Activated T-helper 1 cell treated with anti-CD3 and anti-CD28 coated beads, Interleukin-12 subunit alpha, Interleukin-12 subunit beta, Interleukin-2, Interleukin-4 antibody, amounts not matched to agents 30 ng/mL and 10 ng/mL and 1 ng/mL, durations not matched to agents 14 hours and 24 hours and 36 hours (primary cell): ENCODE measurements at regions of chr12 and their contacts with region 1.

Region 1: DNA sequence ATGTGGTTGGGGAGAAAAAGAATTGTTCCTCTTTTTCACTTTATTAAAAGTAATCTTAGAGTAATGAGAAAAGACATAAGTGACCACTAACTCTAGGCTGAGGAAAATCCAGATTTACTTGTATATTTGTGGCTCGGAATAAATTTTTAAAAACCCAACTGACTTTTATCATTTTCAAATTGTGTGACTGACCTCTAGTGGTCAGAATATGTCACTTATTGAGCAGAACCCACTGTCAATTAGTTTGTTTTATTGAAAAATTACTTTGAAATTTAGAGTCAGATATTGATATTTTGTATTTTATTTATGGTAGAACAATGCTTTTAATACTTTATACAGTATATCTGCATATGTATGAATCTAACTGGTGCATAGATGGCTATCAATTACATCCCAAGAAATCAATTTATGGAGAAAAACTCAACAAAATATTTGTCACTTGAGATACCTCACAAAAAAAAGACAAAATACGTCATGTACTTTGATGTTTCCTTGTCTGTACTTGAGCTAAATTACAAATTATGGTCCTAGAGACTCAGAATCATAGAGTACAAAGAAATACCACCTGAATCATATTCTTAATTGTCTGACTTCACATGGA is 229.4 kb downstream of the CNTN1 start:
- DNase-seq: no peak
- H3K4me3 Mint-ChIP-seq: no peak overlapping the region
- H3K27ac Mint-ChIP-seq: no peak overlapping the region
- H3K4me1 Mint-ChIP-seq: no peaks in the 10 kb centered on the region
- H3K27me3 Mint-ChIP-seq: no peaks in the 10 kb centered on the region

Region 2: GRCh38 chr12:40010899-40011774 is 910.5 kb before region 1 on chr12:
- intact Hi-C with region 1: loop called (anchors 5 kb)
- DNase-seq: peak; percentile 49
- H3K4me3 Mint-ChIP-seq: peak overlapping the region; percentile 12
- H3K27ac Mint-ChIP-seq: no peak overlapping the region
- H3K4me1 Mint-ChIP-seq: peaks cover 31% of the 10 kb centered on the region
- H3K27me3 Mint-ChIP-seq: no peaks in the 10 kb centered on the region

Region 3: DNA sequence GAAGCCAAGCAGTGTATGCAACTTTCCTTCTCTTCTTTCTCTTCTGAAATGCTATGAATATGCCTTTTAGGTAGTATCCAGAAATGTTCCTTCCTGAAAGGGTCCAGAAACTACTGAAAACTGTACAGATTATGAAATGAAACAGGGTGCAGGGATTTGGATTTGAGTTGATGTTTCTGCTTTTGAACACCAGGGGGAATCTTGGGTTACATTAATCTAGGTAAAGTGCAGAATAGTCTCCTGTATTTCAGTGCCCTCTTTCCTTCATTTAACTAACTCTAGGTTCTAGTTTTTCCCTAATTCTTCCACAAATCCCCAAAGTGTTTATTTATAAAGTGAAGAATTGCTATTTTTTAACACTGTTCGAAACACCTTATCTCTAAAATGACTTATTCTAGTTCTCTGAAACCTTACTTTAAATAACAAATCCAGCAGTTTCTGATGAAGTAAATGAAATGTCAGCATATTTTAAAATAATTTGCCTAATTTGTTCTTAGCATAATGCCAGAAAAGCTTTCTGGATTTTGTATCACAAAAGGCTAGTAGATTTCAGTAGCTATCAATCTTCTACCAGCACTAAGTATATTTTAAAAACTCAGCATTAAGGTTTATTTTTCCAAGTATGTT is 585.0 kb before region 1 on chr12:
- intact Hi-C with region 1: loop called (anchors 5 kb)
- DNase-seq: no peak
- H3K4me3 Mint-ChIP-seq: no peak overlapping the region
- H3K27ac Mint-ChIP-seq: no peak overlapping the region
- H3K4me1 Mint-ChIP-seq: no peaks in the 10 kb centered on the region
- H3K27me3 Mint-ChIP-seq: peaks cover 5% of the 10 kb centered on the region

Region 4: DNA sequence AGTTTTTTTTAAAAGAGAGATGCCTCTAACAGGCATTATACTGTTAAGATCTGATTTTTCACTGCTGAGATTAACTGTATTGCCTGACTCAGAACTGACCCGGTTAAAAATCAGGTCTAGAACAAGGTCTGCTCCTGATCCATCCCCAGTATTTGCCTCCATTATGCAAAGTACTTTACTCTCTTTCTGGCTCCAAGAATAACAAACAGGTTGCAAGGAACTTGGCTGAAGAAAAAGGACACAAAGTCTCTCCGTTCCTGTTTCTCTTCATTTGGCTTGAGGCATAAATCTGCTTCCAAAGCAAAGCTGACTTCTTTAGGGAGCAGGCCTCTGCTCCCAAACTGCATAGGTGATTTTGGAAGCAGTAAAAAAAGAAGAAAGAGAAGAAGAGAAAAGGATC is 67.2 kb after region 1 on chr12:
- intact Hi-C with region 1: no loop called
- DNase-seq: no peak
- H3K4me3 Mint-ChIP-seq: no peak overlapping the region
- H3K27ac Mint-ChIP-seq: no peak overlapping the region
- H3K4me1 Mint-ChIP-seq: no peaks in the 10 kb centered on the region
- H3K27me3 Mint-ChIP-seq: no peaks in the 10 kb centered on the region